Tibial artery (tissue), 4 donors: ENCODE measurements at regions of chr16 and their contacts with region 1.

Region 1: DNA sequence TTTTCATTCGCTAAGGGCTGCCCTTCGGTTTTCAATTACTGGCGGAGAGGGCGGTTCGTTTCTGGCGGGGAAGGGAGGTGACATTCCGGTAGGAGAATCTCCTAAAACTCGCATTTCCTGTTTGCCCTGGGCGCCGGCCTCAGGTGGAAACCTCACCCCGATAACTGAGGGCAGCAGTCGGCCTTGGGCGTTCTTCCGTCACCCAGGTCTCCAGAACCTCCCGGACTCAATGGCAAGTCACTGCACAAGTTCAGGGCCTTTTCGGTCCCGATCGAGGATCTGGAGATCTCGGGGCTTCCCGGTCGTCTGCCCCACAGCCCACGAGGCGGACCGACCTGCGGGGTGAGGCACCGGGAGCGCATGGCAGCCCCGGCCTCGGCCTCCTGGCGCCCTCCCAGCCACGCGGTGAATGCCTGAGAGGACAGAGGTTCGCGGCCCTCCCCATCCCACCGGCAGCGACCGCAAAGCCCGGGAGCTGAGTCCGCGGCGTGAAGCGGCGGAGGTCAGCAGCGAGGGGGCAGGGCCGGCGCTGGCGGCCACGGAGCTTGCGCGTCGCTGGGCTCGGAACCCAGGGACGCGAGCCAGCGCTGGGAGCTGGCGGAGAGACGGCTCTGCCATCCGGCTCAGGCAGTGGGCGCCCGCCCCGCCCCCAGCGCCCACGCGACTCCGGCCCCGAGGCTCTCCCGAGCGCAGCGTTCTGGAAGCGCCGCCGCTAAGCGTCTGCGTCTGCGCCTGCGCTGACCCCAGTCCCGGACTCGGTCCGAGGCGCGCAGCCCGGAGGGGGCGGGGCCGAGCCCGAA is 58.4 kb downstream of the SRL start:
- DNase-seq: peak; percentile 83 to 96
- H3K4me3 ChIP-seq: peak overlapping the region; percentile 63 to 79
- H3K27ac ChIP-seq: peak overlapping the region; percentile 89 to 93
- H3K4me1 ChIP-seq: peaks cover 0 to 12% (median 7%) of the 10 kb centered on the region in 4 donors
- H3K27me3 ChIP-seq: no peaks in the 10 kb centered on the region
- CTCF ChIP-seq: no peak

Region 2: DNA sequence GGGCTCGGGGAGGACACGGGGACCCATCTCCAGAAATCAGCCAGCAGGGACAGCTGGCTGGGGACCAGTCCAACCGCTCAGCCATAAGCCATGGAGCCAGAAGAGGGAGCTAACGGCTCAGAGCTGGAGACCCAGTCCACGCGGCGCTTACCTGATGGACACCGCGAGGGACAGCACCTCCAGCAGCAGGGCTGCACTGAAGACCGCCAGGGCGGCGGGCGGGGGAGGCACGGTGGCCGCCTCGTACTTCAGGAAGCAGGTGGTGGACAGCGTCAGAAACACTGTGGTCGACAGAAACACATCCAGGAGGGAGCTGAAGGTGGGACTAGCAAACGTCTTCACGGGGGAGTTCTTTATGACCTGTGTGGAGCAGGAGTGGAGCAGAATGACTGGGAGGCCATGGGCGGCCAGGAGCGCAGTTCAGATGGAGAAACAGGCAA is 200.3 kb before region 1 on chr16:
- intact Hi-C with region 1: loop called (anchors 10 kb)
- DNase-seq: peak; percentile 58 to 78
- H3K4me3 ChIP-seq: no peak overlapping the region
- H3K27ac ChIP-seq: no peak overlapping the region
- H3K4me1 ChIP-seq: peaks cover 0 to 22% (median 9%) of the 10 kb centered on the region in 4 donors
- H3K27me3 ChIP-seq: no peaks in the 10 kb centered on the region
- CTCF ChIP-seq: peak; percentile 67 to 73